Activated CD4-positive, alpha-beta T cell treated with anti-CD3 and anti-CD28 coated beads, Interleukin-2, amount 10 ng/mL, durations not matched to agents 24 days and 14 days (primary cell): ENCODE measurements at regions of chr2 and their contacts with region 1.

Region 1: DNA sequence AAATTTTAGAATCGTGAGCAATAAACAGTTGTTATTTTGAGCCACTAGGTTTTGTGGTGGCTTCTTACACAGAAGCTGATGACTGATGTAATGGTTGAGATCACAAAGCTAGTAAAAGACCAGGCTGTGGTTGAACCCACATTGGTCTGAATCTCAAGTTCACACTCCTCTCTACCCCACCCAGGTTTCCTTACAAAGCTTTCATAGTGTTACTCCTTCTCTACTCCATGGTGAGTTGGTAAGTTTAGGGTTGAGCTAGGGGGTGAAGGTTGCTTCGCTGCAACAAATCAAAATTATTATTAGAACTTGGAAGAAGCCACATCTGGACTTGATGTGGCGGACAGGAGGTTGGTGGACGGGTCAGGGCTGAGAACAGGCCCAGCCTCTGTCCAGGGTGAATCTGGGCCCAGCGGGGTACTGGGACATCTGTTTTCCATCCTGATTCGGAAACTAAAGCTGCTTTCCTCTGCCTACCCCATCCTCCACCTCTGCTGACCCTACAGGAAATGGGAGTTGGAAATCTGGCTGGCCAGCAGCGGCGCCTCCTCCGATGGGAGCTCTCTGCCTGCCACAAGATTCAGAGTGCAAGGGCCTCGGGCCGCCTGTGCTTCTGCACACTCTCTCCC is 86.3 kb downstream of the ZFP36L2 start:
- DNase-seq: peak; percentile 83
- H3K4me3 Mint-ChIP-seq: peak overlapping the region; percentile 62
- H3K27ac Mint-ChIP-seq: peak overlapping the region; percentile 85
- H3K4me1 Mint-ChIP-seq: peaks cover 63% of the 10 kb centered on the region
- H3K27me3 Mint-ChIP-seq: no peaks in the 10 kb centered on the region

Region 2: DNA sequence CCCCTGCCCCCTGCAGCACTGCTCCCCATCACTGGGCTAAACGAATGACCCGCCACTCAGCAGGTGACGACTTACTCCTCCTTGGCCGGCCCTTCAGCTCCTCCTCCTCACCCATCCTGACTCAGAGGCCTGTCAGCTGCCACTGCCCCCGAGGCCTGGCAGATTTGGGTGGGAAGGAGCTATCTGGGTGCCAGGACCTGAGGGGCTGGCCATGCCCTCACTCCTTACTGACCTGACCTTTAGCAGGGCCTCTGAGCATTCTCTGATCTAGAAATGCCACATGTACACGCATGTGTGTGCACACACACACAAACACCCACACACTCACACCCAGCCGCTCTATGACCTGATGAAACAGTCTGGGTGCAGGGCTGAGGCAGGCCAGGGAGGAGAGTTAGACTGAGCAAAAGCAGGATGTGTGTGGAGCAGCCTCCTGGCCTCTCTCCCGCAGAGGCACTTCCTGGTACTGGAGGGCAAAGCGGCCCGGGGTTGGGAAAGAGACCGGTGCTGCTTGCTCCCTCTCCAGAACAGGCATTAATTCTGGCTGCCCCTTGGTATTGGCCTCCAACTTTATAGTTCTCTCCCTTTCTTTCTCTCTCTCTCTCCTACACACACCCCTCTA is 18.3 kb after region 1 on chr2:
- intact Hi-C with region 1: loop called (anchors 1 kb)
- DNase-seq: peak; percentile 89
- H3K4me3 Mint-ChIP-seq: peak overlapping the region; percentile 78
- H3K27ac Mint-ChIP-seq: peak overlapping the region; percentile 98
- H3K4me1 Mint-ChIP-seq: peaks cover 56% of the 10 kb centered on the region
- H3K27me3 Mint-ChIP-seq: no peaks in the 10 kb centered on the region

Region 3: DNA sequence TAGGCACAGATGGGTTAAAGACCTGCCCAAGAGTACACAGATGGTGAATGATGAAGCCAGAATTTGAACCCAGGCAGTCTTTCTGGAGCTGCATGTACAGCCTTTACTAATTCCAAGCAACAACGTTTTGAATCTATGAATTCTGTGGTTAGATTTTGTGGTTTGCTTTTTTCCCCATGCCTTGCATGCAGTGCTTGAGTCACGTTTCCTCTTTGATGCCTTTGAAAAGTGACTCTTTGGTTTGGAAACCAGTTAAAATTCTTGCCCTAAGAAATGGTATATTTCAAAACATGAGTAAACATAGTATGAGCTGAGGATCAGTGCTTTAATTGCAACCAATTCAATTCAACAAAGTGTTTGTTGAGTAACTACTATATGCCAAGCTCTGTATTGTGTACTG is 980.3 kb after region 1 on chr2:
- intact Hi-C with region 1: no loop called
- DNase-seq: peak; percentile 73
- H3K4me3 Mint-ChIP-seq: no peak overlapping the region
- H3K27ac Mint-ChIP-seq: no peak overlapping the region
- H3K4me1 Mint-ChIP-seq: peaks cover 7% of the 10 kb centered on the region
- H3K27me3 Mint-ChIP-seq: peaks cover 6% of the 10 kb centered on the region